Right cardiac atrium (tissue), 5 donors: ENCODE measurements at regions of chr16 and their contacts with region 1.

Region 1: DNA sequence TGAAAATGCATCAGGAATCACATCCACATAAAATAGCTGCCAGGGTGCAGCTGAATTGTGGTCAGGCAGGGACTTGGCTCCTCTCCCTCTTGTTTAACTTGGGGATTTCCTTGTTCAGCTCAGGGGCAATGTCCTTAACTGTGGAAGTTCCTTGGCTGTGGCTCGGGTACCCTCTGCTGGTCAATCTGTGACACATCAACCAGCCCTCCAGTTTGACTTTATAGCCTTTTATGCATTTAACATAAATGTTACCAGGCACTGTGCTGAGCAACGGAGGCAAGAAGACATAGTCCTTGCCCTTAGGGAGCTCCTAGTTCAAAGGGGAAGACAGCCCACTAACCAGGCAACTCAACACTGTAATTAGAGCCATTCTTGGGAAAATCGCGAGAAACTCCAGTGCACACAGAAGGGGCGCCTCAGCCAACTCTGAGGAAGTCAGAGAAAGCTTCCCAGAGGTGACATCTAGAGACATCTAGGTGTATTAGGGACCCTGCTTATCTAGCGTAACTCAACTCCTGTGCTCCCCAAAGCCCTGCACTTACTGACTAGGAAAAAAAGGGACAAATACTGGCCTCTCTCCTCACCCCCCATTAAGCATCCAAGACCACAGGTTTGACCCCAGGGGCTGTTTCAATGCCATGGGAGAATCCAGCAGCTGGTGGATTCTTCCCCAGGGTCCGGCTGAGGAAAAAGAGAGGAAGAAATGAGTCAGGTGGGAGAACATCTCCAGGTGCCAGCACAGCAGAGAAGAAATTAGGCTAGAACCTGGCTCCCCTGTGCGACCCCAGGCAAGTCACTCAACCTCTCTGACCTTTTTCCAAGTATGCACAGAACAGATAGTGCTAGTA is 17.3 kb upstream of the EEF2K start:
- DNase-seq: peak; percentile 63 to 75 (median 63)
- ATAC-seq: no peak
- H3K4me3 ChIP-seq: no peak overlapping the region
- H3K27ac ChIP-seq: peak overlapping the region; percentile 63
- H3K4me1 ChIP-seq: peaks cover 6% of the 10 kb centered on the region
- H3K27me3 ChIP-seq: no peaks in the 10 kb centered on the region

Region 2: GRCh38 chr16:21708533-21709115 is 480.2 kb before region 1 on chr16:
- intact Hi-C with region 1: no loop called
- DNase-seq: peak; percentile 52 to 84 (median 56)
- ATAC-seq: peak; percentile 31 to 44
- H3K4me3 ChIP-seq: no peak overlapping the region
- H3K27ac ChIP-seq: no peak overlapping the region
- H3K4me1 ChIP-seq: no peaks in the 10 kb centered on the region
- H3K27me3 ChIP-seq: no peaks in the 10 kb centered on the region

Region 3: GRCh38 chr16:21952793-21953540 is 235.9 kb before region 1 on chr16 and contains the start of gene UQCRC2:
- intact Hi-C with region 1: loop called in 1 of 4 experiments (anchors 5 kb)
- DNase-seq: peak; percentile 89 to 94 (median 93)
- ATAC-seq: peak; percentile 97
- H3K4me3 ChIP-seq: peak within 1 kb of the TSS; percentile 99
- H3K27ac ChIP-seq: peak within 1 kb of the TSS; percentile 97
- H3K4me1 ChIP-seq: peaks cover 4% of the 10 kb centered on the region
- H3K27me3 ChIP-seq: no peaks in the 10 kb centered on the region
- total RNA-seq, gene UQCRC2: 516 to 665 (median 637) TPM

Region 4: DNA sequence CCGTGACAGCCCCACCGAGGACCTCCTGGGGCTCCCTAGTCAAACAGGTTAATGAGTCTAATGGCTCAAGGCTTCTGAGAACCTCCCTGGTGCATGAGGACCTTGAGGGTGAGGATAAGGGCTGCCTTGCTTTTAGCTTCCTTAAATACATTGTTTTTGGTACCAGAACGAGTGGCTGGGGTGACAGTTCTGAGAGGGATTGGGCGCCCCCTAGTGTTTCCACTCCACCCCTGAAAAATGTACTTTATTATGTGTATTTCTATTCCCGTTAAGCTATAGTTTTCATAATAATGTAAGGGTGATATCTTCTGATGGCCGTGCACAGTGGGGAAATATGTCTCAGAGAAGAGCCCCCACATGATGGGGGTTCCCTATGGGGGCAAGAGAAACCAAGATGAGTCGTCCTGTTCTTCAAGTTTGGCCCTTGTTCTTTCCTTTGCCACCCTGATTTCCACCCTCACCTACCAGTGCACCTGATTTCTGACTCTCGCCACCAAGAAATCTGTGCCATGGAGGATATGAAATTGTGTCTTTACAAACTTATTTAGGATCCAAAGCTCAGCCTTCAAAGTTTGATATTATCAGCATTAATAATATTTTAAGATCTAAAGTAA is 111.0 kb before region 1 on chr16:
- intact Hi-C with region 1: loop called in 1 of 4 experiments (anchors 5 kb)
- DNase-seq: peak; percentile 47 to 85 (median 66)
- ATAC-seq: peak; percentile 63 to 66
- H3K4me3 ChIP-seq: no peak overlapping the region
- H3K27ac ChIP-seq: no peak overlapping the region
- H3K4me1 ChIP-seq: no peaks in the 10 kb centered on the region
- H3K27me3 ChIP-seq: no peaks in the 10 kb centered on the region

Region 5: DNA sequence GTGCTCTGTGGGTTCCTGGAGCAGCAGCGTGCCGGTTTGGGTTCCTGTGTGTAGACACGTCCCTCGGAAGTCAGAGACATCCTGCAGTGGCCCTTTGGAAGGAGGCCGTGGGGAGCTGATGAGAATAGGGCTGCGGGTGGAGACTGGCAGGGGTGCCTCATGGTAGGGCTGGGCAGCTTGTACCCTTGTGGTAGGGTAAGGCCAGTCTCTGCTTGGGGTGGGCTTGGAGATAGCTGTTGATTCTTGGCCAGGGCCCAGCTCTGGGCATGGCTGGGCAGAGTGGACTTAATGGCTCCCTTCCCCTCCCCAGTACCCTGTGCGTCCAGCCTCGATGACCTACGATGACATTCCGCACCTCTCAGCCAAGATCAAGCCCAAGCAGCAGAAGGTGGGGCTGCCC is 119.0 kb after region 1 on chr16:
- intact Hi-C with region 1: no loop called
- DNase-seq: no peak
- ATAC-seq: peak in 1 of 2 donors; percentile 17
- H3K4me3 ChIP-seq: no peak overlapping the region
- H3K27ac ChIP-seq: no peak overlapping the region
- H3K4me1 ChIP-seq: no peaks in the 10 kb centered on the region
- H3K27me3 ChIP-seq: no peaks in the 10 kb centered on the region